GM10248 (cell line): ENCODE measurements at regions of chr20 and their contacts with region 1.

Region 1: GRCh38 chr20:43448748-43449535 is 8.8 kb upstream of the SRSF6 start:
- DNase-seq: peak; percentile 66
- CTCF ChIP-seq: peak; percentile 75

Region 2: GRCh38 chr20:43434565-43434964 is 14.4 kb before region 1 on chr20:
- CTCF ChIA-PET with region 1: no interaction called
- POLR2A ChIA-PET with region 1: no interaction called
- DNase-seq: no peak
- CTCF ChIP-seq: no peak

Region 3: GRCh38 chr20:43642548-43642947 is 193.6 kb after region 1 on chr20:
- CTCF ChIA-PET with region 1: no interaction called
- POLR2A ChIA-PET with region 1: no interaction called
- DNase-seq: no peak
- CTCF ChIP-seq: no peak

Region 4: GRCh38 chr20:44001667-44002596 is 553.0 kb after region 1 on chr20:
- CTCF ChIA-PET with region 1: no interaction called
- POLR2A ChIA-PET with region 1: no interaction called
- DNase-seq: peak; percentile 41
- CTCF ChIP-seq: no peak

Region 5: DNA sequence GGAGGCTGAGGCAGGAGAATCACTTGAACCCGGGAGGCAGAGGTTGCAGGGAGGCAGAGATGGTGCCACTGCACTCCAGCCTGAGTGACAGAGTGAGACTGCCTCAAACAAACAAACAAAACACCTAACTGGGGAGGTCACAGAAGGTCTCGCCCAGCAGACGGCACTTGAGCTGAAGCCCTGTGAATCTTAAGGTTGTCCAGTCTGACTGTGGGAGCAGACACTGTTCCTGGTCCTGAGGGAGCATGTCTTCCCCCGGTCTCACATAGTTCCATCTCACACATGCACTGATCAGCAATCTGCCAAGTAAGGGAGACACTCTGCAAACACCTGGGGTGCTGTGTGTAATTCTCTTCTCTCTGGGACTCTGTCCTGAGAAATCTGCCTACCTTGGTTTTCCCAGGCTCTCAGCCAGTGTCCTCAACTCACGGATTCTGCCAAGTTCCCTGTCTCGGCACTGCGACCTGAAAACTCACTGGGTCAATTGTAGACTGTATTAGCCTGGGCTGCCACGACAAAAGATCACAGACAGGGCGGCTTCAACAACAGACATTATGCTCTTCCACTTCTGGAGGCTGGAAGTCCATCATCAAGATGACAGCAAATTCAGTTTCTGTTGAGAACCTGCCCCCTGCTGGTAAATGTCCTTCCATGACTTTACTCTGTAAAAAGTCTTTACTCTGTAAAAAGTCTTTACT is 643.8 kb after region 1 on chr20:
- CTCF ChIA-PET with region 1: interaction called, 17 read pairs
- POLR2A ChIA-PET with region 1: no interaction called
- DNase-seq: no peak
- CTCF ChIP-seq: peak; percentile 45